Thyroid gland (tissue), 4 donors: ENCODE measurements at regions of chr9 and their contacts with region 1.

Region 1: DNA sequence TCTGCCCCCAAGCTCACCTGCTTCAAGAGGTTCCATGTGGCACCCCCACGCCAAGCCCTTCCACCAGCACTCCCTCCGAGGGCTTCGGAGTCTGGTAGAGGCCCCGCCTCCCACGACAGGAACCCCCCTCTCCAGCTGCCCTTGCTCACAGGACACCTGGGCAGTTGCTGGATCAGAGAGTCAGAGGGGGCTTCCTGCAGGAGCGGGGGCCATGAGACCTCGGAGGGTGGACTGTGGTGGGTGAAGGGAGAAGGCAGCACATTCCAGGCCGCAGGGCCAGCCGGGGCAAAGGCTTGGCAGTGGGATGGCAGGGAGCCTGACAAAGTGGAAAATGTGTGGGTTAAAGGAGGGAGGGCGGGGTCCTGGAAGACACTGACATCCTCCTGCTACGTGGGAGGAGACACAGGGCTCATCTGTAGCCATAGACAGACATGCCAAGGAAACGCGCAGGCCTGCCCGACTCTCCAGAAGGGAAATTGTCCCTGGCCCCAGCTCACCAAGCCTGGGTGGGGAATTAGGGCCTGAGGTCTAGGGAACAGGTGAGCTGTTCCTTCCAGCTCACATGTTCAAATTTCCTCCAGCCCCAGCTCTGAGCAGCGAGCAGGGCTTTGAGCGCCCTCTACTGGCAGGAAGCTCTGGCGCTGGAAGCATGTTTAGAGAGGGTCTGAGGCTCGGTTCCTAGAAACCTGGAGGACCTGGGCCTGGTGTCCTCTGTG is 74.2 kb downstream of the NTNG2 start:
- DNase-seq: peak; percentile 78 to 82
- H3K4me3 ChIP-seq: no peak overlapping the region
- H3K27ac ChIP-seq: no peak overlapping the region
- H3K4me1 ChIP-seq: peaks cover 0 to 6% of the 10 kb centered on the region in 2 donors
- H3K27me3 ChIP-seq: no peaks in the 10 kb centered on the region
- CTCF ChIP-seq: peak; percentile 76 to 97 (median 80)
- POLR2A ChIP-seq: no peak

Region 2: GRCh38 chr9:131762356-131762932 is 473.7 kb before region 1 on chr9:
- intact Hi-C with region 1: loop called (anchors 5 kb)
- DNase-seq: peak; percentile 69 to 73
- H3K4me3 ChIP-seq: no peak overlapping the region
- H3K27ac ChIP-seq: no peak overlapping the region
- H3K4me1 ChIP-seq: peaks cover 0 to 5% of the 10 kb centered on the region in 2 donors
- H3K27me3 ChIP-seq: no peaks in the 10 kb centered on the region
- CTCF ChIP-seq: peak; percentile 64 to 93 (median 88)
- POLR2A ChIP-seq: no peak

Region 3: DNA sequence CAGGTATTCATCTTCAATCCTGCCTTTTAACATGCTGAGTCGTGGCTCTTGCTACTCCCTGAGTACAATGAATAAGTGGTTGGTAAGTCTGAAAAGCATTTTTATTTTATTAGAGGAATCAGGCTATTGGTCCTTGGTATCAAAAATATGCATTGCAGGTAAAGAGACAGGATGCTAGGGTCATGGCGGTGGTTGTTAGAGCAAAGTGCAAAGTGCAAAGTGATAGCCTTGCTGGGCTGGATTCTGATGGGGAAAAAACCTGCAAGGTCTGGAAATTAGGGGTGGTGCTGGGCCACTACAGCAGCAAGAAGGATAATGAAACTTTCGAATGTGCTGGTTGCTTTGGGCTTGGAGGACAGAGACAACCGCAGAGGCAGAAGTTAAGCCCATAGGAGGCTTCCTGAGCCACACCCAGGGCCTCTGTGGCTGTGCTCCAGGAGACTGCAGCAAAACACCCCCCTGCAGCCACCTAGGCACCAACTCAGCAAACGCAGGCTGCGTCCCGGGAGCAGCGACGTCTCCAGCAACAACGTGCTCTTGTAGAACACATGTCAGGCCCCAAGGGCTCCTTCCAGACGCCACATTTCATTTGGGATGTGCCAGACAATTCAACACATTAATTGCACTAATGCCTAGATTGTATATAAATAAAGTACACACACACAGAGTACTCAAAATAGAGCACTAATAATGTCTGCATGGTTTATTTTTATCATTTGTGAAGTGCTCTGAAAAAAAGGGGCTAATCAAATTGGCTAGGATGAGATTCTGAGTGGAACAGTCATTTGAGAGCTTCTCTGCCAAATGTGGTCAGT is 346.5 kb before region 1 on chr9:
- intact Hi-C with region 1: no loop called
- DNase-seq: no peak
- H3K4me3 ChIP-seq: no peak overlapping the region
- H3K27ac ChIP-seq: no peak overlapping the region
- H3K4me1 ChIP-seq: peaks cover 52 to 69% of the 10 kb centered on the region in 2 donors
- H3K27me3 ChIP-seq: no peaks in the 10 kb centered on the region
- CTCF ChIP-seq: no peak
- POLR2A ChIP-seq: no peak

Region 4: GRCh38 chr9:132032238-132032950 is 203.7 kb before region 1 on chr9:
- intact Hi-C with region 1: no loop called
- DNase-seq: peak; percentile 31 to 57
- H3K4me3 ChIP-seq: no peak overlapping the region
- H3K27ac ChIP-seq: no peak overlapping the region
- H3K4me1 ChIP-seq: peaks cover 0 to 3% of the 10 kb centered on the region in 2 donors
- H3K27me3 ChIP-seq: no peaks in the 10 kb centered on the region
- CTCF ChIP-seq: no peak
- POLR2A ChIP-seq: no peak

Region 5: DNA sequence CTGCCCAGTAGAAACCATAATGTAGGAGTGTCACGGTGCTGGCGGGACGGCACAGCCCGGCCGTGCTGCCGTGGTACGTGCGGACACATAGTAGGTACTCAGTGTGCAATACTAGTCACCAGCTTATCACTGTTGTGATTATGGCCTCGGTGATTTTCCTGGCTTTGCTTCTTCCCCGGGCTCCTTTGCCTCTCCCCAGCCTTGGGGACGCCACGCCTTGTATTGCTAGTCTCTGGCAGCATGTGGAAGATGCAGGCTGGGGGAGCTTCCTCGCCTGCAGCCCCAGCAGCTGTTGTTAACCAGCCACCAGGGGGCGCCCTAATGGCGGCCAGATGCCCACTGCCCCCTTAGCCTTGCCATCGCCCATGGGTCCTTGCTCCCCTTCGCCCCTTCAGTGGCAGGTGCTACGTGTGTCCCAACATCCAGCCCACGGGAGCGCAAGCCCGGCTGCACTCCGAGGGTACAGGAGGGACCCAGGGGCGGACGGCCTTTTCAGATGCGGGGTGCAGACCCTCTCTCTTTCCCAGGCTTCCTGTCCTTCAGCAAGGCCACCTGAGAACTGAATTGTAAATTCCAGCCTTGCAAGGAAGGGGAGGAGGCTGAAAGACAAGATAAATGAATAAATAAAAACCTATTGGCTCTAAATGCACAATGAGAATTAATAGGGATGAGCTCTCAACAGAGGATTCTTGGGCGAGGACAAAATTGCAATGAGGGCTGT is 66.3 kb before region 1 on chr9:
- intact Hi-C with region 1: loop called (anchors 5 kb)
- DNase-seq: peak; percentile 39 to 41
- H3K4me3 ChIP-seq: no peak overlapping the region
- H3K27ac ChIP-seq: no peak overlapping the region
- H3K4me1 ChIP-seq: peaks cover 0 to under 1% of the 10 kb centered on the region in 2 donors
- H3K27me3 ChIP-seq: peaks cover 20% of the 10 kb centered on the region
- CTCF ChIP-seq: peak; percentile 23 to 67 (median 48)
- POLR2A ChIP-seq: no peak